ENCODE measurements at regions of chr16 and their contacts with region 1.

Region 1: DNA sequence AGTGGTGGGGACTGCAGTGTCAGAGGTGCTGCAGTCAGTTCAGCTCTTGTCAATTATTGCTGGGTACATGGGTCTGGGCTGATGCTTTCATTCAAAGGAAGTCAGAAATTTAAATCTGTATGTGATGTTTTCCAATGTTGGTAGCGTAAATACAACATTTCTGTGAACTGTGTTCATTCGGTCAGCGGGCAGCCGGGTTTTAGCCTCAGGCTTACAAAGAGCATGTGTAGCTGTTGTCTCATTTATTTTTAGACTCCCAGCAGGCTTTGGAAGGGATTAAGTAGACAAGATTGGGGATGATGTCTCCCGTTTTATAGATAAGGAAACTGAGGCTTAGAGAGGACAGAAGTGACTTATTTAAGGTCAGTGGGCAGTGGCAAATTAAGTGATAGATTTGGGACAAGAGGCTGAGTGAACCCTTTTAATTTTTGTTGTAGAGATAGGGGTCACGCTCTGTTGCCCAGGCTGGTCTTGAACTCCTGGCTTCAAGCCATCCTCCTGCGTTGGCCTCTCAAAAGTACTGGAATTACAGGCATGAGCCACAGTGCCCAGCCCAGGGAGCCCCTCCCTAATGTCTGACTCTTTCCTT is 8.1 kb downstream of the AQP8 start:
- DNase-seq: no peak
- H3K4me3 ChIP-seq: no peak overlapping the region
- H3K27ac ChIP-seq: no peak overlapping the region
- H3K4me1 ChIP-seq: peaks cover 7% of the 10 kb centered on the region
- H3K27me3 ChIP-seq: no peaks in the 10 kb centered on the region
- CTCF ChIP-seq: no peak
- POLR2A ChIP-seq: no peak

Region 2: DNA sequence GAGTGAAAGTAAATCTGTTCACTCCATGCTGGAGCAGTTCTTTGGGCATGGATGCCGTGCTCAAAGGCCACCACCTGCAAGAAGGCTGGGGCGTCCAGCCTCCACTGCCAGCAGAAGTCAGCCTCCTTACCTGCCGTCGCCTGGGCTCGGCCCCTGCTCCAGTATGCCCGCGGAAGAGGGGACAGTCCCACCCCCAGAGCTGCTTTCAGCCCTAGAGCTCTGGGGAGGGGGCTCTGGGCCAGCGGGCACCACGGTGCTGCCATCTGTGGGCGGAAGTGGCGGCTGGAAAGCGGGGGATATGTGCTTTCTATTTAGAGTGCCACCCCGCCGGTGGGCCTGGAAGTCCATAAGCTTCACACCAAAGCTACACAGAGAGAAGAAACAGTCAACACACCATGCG is 285.6 kb before region 1 on chr16:
- intact Hi-C with region 1: loop called (anchors 10 kb)
- DNase-seq: no peak
- H3K4me3 ChIP-seq: no peak overlapping the region
- H3K27ac ChIP-seq: no peak overlapping the region
- H3K4me1 ChIP-seq: no peaks in the 10 kb centered on the region
- H3K27me3 ChIP-seq: no peaks in the 10 kb centered on the region
- CTCF ChIP-seq: no peak
- POLR2A ChIP-seq: no peak

Region 3: DNA sequence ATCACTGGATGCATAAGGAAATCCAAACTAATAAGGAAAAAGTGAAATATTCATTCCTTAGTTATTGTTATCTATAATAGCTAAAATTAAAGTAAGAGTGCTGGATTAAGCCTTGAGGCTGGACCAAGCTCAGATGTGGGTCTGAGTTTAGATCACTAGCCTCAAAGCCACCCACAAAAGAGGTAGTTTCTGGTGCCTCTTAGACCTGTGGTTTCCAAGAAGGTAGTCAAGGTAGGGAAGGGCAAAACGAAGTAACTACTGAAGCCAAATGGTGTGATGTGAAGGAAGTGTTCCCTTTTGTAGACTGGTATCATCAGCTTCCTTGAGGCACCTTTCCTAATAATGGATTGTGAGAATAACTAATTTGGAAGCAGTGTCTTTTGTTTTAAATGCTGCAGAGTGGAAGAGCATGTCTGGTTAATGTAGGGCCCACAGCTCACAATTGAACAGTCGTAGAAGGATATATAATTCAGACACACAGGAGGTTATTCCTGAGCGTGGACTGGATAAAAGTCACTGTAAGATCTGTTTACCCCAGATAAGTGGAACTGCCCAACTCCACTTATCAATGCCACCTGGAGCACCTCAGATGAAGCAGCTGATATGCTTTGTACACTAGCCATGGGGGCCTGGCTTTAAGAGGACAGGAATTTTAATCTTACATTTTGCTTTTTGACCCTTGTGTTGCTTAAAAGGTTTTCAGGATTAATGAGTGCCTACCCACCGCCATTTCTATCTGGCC is 145.0 kb before region 1 on chr16:
- intact Hi-C with region 1: loop called (anchors 10 kb)
- DNase-seq: no peak
- H3K4me3 ChIP-seq: no peak overlapping the region
- H3K27ac ChIP-seq: no peak overlapping the region
- H3K4me1 ChIP-seq: no peaks in the 10 kb centered on the region
- H3K27me3 ChIP-seq: no peaks in the 10 kb centered on the region
- CTCF ChIP-seq: no peak
- POLR2A ChIP-seq: no peak